Endothelial cell of umbilical vein (primary cell): ENCODE measurements at regions of chrX and their contacts with region 1.

Region 1: GRCh38 chrX:40108959-40109287 is 11.2 kb upstream of the BCOR start:
- DNase-seq: peak; percentile 73
- H3K4me3 ChIP-seq: peak overlapping the region; percentile 13 to 38 (median 36)
- H3K27ac ChIP-seq: peak overlapping the region; percentile 70
- H3K4me1 ChIP-seq: peaks cover 13% of the 10 kb centered on the region
- H3K27me3 ChIP-seq: no peaks in the 10 kb centered on the region
- CTCF ChIP-seq: no peak
- POLR2A ChIP-seq: no peak

Region 2: DNA sequence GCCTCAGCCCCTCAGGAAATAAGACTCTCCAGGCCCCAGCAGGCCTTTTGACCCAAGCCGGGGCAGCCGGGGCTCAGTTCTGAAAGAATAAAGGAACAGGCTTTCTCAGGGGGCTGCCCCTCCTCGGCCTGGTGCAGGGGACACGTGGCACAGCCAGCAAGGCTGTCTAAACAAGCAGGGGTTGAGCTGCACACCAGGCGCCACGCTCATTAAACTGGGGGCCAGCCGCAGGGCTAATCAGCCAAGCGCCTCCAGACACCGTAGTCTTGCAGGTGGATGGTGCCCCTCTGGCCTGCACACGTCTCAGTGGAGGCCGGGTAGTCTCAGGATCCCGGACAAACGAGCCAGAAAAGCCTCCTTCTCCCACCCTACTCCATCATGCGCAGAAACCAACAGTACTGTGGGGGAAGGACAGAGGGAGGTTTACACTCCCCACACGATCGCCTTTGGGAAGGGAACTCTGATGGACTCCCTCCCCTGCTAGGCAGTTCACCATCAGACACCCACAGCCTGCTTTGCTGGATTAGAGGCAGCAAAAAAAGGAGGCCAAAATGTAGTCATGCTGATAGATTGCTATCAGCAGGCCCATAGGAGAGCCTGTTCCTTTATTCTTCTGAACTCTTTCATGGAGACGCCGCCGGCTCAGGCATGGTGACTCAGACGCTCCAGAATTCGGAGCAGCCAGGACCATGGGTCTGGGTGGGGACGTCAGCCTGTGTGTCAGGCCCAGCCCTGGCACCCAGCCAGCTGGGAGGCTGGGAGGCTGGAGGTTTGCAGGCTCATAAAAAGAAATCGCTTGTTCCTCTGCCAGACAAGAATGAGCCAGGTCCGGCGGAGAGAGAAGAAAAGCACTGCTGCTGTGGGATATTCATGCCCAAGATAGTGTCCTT is 353.5 kb before region 1 on chrX:
- CTCF ChIA-PET with region 1: no interaction called
- POLR2A ChIA-PET with region 1: no interaction called
- dilution Hi-C with region 1: no loop called
- intact Hi-C with region 1: loop called (anchors 5 kb)
- DNase-seq: peak; percentile 92
- H3K4me3 ChIP-seq: no peak overlapping the region
- H3K27ac ChIP-seq: peak overlapping the region; percentile 95
- H3K4me1 ChIP-seq: peaks cover 64% of the 10 kb centered on the region
- H3K27me3 ChIP-seq: no peaks in the 10 kb centered on the region
- CTCF ChIP-seq: no peak
- POLR2A ChIP-seq: no peak

Region 3: DNA sequence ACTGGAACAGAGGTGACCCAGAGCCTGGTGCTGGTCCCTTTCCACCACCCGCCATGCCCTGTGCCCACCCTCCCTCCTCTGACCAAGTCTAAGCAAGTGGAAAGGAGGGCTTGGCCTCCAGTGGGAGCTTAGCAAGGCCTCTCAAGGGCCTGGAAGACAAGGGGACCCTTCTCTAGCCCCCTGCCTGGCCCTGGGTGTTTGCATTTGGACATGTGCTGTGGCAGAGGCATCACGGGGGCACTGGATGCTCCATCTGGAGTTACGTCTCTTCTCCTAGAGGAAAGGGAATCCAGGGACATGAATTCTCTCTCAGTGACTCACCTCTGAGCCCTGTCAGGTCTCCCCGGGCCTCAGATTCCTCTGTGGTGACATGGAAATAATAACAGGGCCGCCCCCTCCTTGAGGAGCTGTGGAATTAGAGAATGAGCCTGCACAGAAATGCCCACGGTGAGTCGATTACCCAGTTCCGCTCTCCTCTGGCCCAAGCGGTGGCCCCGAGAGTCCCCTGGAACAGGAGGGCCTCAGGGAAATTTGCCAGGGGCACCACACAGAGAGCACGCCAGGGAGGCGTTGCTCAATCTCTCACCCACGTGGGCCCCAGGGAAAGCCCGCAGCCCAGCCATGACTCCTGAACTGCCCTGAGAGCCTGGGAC is 200.8 kb before region 1 on chrX:
- CTCF ChIA-PET with region 1: no interaction called
- POLR2A ChIA-PET with region 1: no interaction called
- dilution Hi-C with region 1: no loop called
- intact Hi-C with region 1: loop called (anchors 5 kb)
- DNase-seq: peak; percentile 45
- H3K4me3 ChIP-seq: no peak overlapping the region
- H3K27ac ChIP-seq: peak overlapping the region; percentile 72
- H3K4me1 ChIP-seq: peaks cover 21% of the 10 kb centered on the region
- H3K27me3 ChIP-seq: no peaks in the 10 kb centered on the region
- CTCF ChIP-seq: no peak
- POLR2A ChIP-seq: no peak

Region 4: GRCh38 chrX:40153335-40154249 is 44.7 kb after region 1 on chrX:
- CTCF ChIA-PET with region 1: interaction called, 8 read pairs
- POLR2A ChIA-PET with region 1: no interaction called
- dilution Hi-C with region 1: no loop called
- intact Hi-C with region 1: loop called (anchors 1 kb)
- DNase-seq: no peak
- H3K4me3 ChIP-seq: peak overlapping the region; percentile 7 to 38 (median 15)
- H3K27ac ChIP-seq: peak overlapping the region; percentile 12
- H3K4me1 ChIP-seq: peaks cover 32% of the 10 kb centered on the region
- H3K27me3 ChIP-seq: no peaks in the 10 kb centered on the region
- CTCF ChIP-seq: no peak
- POLR2A ChIP-seq: no peak

Region 5: DNA sequence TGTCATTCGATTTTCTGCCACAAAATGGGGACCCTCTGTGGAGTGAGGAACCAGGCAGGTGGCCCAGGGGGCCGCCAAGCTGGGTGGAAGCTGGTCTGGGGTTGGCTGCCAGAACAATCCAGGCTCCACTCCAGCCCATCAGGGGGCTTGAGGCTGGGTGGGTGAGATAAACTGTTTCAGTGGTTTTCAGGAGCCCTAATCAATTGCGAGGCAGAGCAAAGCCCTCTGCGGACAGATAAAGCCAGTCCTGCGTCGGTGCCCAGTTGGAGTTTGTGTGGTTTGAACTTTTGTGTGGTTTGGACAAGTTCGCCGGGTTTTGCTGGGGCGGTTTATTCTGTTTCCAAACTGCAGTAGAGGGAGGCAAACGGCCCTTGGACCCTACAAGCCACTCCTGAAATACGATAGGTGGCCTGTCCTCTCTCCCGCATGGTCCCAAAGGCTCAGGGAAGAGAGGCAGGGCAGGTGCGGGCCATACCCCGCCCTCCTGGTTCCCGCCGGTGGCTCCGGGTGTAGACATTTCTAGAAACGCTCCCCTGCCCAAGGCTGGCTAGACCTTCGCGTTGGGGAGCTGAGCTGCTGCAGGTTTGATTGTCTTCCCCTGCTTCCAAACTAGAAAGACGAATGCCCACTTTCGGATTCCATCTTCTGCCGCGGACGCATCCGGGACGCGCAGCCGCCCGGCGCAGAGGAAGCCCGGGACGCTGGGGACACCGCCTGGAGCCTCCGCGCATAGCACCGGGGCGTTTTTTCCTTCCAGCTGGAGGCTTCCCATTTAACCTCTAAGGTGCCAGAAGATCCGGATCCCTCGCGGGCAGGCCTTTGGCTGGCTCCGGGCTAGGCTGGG is 157.8 kb after region 1 on chrX:
- CTCF ChIA-PET with region 1: interaction called, 6 read pairs
- POLR2A ChIA-PET with region 1: no interaction called
- dilution Hi-C with region 1: no loop called
- intact Hi-C with region 1: loop called (anchors 2 kb)
- DNase-seq: peak; percentile 45
- H3K4me3 ChIP-seq: peak overlapping the region in 2 of 3 experiments; percentile 10 to 38
- H3K27ac ChIP-seq: peak overlapping the region; percentile 37
- H3K4me1 ChIP-seq: peaks cover 20% of the 10 kb centered on the region
- H3K27me3 ChIP-seq: no peaks in the 10 kb centered on the region
- CTCF ChIP-seq: peak; percentile 68 to 71
- POLR2A ChIP-seq: no peak